Common myeloid progenitor, CD34-positive (primary cell): ENCODE measurements at regions of chr17 and their contacts with region 1.

Region 1: GRCh38 chr17:56679115-56679766 is 85.7 kb downstream of the NOG start:
- DNase-seq: peak; percentile 53 to 69 (median 63)
- H3K4me3 ChIP-seq: peak overlapping the region in 6 of 7 experiments; percentile 35 to 72 (median 50)
- H3K27ac ChIP-seq: no peak overlapping the region
- H3K4me1 ChIP-seq: peaks cover 36 to 72% (median 60%) of the 10 kb centered on the region in 4 experiments
- H3K27me3 ChIP-seq: peaks cover 0 to 11% (median 5%) of the 10 kb centered on the region in 5 experiments

Region 2: DNA sequence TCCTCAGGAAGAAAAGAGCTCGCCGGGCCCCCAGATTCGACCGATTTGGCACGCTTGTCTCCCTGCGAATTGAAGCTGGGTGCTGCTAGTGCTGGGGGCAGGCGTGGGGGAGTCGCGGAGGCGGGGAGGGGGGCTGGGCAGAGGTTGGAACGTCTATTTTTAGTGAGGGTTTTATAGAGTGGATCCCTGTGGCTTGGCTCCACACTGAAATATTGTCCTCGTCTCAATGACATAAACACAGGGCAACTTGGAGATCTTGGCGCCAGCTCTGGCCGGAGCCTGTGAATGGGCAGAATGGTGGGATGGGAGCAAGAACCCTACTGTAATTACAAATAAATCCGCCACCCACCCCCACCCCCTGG is 101.4 kb before region 1 on chr17:
- CTCF ChIA-PET with region 1: no interaction called
- POLR2A ChIA-PET with region 1: no interaction called
- DNase-seq: no peak
- H3K4me3 ChIP-seq: no peak overlapping the region
- H3K27ac ChIP-seq: no peak overlapping the region
- H3K4me1 ChIP-seq: peaks cover 0 to 9% (median 0%) of the 10 kb centered on the region in 4 experiments
- H3K27me3 ChIP-seq: no peaks in the 10 kb centered on the region

Region 3: GRCh38 chr17:56653877-56654276 is 25.4 kb before region 1 on chr17:
- CTCF ChIA-PET with region 1: interaction called, 10 read pairs
- POLR2A ChIA-PET with region 1: interaction called, 3 read pairs
- DNase-seq: peak; percentile 81 to 90 (median 84)
- H3K4me3 ChIP-seq: no peak overlapping the region
- H3K27ac ChIP-seq: no peak overlapping the region
- H3K4me1 ChIP-seq: peaks cover 9 to 25% (median 12%) of the 10 kb centered on the region in 4 experiments
- H3K27me3 ChIP-seq: no peaks in the 10 kb centered on the region

Region 4: DNA sequence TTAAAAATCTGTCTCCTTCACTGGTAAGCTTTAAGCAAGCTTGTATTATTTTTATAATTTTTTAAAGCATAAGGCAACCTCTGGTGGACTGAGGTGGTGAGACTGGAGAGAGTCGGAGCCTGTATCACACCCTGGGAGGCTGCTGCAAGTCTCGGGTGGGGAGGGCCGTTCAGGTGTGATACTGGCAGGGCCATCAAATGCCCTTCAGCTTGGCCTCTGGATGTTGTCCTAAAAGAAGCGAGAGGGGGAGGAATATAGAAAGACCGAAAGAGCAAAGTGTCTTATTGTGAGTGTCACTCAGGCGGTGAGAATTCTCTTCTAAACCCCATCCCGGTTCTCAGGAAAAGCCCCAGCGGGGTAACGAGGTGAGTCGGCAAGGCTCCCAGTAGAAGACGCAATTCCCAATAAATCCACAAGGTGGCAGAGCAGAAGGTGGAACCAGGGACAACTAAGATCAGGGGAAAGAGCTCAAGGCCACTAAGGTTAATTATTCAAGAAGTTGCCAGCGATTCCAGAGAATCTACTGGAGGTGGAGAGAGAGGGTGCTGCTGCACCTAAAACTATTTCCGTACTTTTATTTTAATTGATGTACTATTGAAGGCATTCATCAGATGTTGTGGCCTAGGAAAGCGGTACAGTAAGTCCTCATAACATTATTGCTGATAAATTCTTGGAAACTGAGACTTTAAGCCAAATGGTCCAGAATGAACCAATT is 140.3 kb after region 1 on chr17:
- CTCF ChIA-PET with region 1: no interaction called
- POLR2A ChIA-PET with region 1: no interaction called
- DNase-seq: peak; percentile 73 to 86 (median 78)
- H3K4me3 ChIP-seq: peak overlapping the region in 2 of 7 experiments; percentile 19 to 29
- H3K27ac ChIP-seq: no peak overlapping the region
- H3K4me1 ChIP-seq: peaks cover 0 to 12% (median 6%) of the 10 kb centered on the region in 4 experiments
- H3K27me3 ChIP-seq: no peaks in the 10 kb centered on the region